ENCODE measurements at regions of chr7 and their contacts with region 1.

Region 1: DNA sequence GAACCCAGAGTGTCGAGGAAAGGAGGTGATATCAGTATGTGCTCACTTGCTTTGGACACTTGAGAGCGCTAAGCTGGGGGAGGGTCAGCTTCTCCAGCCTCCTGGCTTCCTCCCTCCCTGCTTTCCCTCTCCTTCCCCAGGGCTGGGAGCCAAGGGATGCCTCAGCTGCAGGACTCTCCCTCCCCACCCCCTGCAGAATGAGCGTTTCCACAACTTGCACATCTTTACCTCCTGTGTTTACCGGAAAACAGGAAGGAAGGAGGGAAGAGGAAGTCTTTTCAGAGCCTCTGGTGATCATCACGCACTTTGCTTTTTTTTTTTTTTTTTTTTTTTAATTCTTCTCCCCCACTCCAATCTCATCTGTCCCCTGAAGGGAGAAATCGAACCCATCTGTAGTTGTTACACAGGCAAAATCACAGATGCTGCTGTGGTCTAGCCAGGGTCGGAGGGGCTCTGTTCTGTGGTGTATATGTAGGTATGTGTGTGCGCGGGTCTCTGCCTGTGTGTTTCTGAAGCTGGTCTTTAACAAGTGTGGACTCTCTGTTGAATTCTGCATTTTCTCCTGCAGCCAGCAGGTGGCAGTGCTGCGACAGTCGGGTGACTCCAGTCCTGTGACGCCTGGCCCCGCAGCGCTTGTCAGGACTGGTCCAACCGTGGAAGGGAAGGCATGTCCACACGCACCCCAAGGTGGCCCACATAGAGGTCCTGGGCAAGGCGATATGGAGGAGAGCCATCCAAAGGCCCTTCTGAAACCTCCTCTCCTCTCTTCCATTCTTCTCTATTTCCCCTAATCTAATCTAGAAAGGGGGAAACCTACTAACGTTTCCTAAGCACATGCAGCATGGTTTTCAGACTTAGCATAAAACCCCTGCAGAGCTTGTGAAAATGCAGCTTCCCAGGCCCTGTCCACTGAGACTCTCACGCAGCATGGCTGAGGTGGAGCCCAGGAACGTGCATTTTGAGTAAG is 257.6 kb downstream of the PLXNA4 start:
- DNase-seq: peak; percentile 86
- H3K4me3 ChIP-seq: no peak overlapping the region
- H3K27ac ChIP-seq: no peak overlapping the region
- H3K4me1 ChIP-seq: no peaks in the 10 kb centered on the region
- H3K27me3 ChIP-seq: peaks cover 27% of the 10 kb centered on the region
- CTCF ChIP-seq: peak; percentile 92

Region 2: DNA sequence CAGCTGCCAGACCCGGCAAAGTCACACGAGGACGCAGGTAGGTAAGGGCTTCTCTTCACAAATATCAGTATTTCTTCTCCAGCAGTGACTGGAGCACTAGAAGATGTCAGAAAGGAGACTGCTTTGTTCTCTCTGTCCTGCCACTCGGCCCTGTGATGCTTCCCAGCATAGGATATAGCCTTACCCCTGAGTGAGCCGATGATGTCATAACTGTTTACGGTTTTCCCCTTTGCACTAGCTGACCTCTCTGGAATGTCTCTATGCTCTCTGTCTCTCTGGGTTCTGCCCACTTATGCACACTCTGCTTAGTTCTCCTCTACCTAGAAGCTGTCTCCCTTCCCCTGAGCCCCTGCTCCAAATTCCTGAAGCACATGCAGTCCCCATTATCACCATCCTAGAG is 594.7 kb before region 1 on chr7:
- CTCF ChIA-PET with region 1: no interaction called
- POLR2A ChIA-PET with region 1: no interaction called
- intact Hi-C with region 1: no loop called
- DNase-seq: no peak
- H3K4me3 ChIP-seq: no peak overlapping the region
- H3K27ac ChIP-seq: no peak overlapping the region
- H3K4me1 ChIP-seq: peaks cover 18% of the 10 kb centered on the region
- H3K27me3 ChIP-seq: no peaks in the 10 kb centered on the region
- CTCF ChIP-seq: no peak

Region 3: DNA sequence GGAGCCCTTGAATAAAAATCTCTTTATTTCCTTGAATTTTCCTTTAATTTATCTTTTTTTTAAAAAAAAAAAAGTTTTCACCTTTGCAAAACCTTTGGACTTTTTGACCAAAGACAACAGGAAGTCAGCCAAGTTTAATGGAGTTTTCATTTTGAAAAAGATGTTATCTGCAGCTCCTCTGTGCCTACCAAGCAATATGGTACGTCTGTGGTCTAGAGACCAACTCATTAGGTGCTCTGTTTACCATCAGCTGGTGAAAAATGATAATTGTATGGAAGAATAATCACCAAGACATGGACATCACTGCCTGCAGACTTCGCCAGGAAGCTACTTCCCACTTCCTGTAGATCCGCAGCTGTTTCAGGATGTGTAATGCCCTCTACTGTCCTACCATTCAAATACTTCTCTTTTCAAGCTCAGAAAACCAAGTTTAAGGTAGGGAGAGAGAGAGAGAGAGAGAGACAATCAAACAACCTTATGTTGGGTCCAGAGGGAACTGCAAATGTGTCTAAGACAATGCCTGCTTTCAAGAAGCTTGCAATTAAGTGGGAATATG is 238.9 kb after region 1 on chr7:
- CTCF ChIA-PET with region 1: interaction called, 7 read pairs
- POLR2A ChIA-PET with region 1: no interaction called
- intact Hi-C with region 1: loop called (anchors 2 kb)
- DNase-seq: peak; percentile 50
- H3K4me3 ChIP-seq: no peak overlapping the region
- H3K27ac ChIP-seq: no peak overlapping the region
- H3K4me1 ChIP-seq: peaks cover 6% of the 10 kb centered on the region
- H3K27me3 ChIP-seq: peaks cover 24% of the 10 kb centered on the region
- CTCF ChIP-seq: peak; percentile 41

Region 4: GRCh38 chr7:132580717-132581285 is 262.2 kb after region 1 on chr7:
- CTCF ChIA-PET with region 1: interaction called, 9 read pairs
- POLR2A ChIA-PET with region 1: no interaction called
- intact Hi-C with region 1: loop called (anchors 2 kb)
- DNase-seq: peak; percentile 78
- H3K4me3 ChIP-seq: no peak overlapping the region
- H3K27ac ChIP-seq: no peak overlapping the region
- H3K4me1 ChIP-seq: peaks cover 9% of the 10 kb centered on the region
- H3K27me3 ChIP-seq: peaks cover 47% of the 10 kb centered on the region
- CTCF ChIP-seq: peak; percentile 76

Measured in A673 (cell line).